Activated CD4-positive, alpha-beta T cell treated with anti-CD3 and anti-CD28 coated beads, Interleukin-2, amount 10 ng/mL, durations not matched to agents 24 days and 14 days (primary cell): ENCODE measurements at regions of chr4 and their contacts with region 1.

Region 1: GRCh38 chr4:88284439-88285234 is at the start of gene PPM1K:
- DNase-seq: peak; percentile 100
- H3K4me3 Mint-ChIP-seq: peak within 1 kb of the TSS; percentile 95
- H3K27ac Mint-ChIP-seq: peak within 1 kb of the TSS; percentile 99
- H3K4me1 Mint-ChIP-seq: peaks cover 37% of the 10 kb centered on the region
- H3K27me3 Mint-ChIP-seq: no peaks in the 10 kb centered on the region
- total RNA-seq, gene PPM1K: 38.8 and 43.8 TPM in 2 replicates

Region 2: GRCh38 chr4:86934771-86935565 is 1349.7 kb before region 1 on chr4 and contains the start of gene AFF1:
- intact Hi-C with region 1: loop called (anchors 10 kb)
- DNase-seq: peak; percentile 96
- H3K4me3 Mint-ChIP-seq: peak within 1 kb of the TSS; percentile 94
- H3K27ac Mint-ChIP-seq: peak within 1 kb of the TSS; percentile 98
- H3K4me1 Mint-ChIP-seq: peaks cover 48% of the 10 kb centered on the region
- H3K27me3 Mint-ChIP-seq: no peaks in the 10 kb centered on the region
- total RNA-seq, gene AFF1: 44.0 and 44.3 TPM in 2 replicates

Region 3: GRCh38 chr4:88007304-88008121 is 277.1 kb before region 1 on chr4 and contains the start of gene PKD2:
- intact Hi-C with region 1: loop called (anchors 1 kb)
- DNase-seq: peak; percentile 96
- H3K4me3 Mint-ChIP-seq: peak within 1 kb of the TSS; percentile 94
- H3K27ac Mint-ChIP-seq: peak within 1 kb of the TSS; percentile 88
- H3K4me1 Mint-ChIP-seq: peaks cover 31% of the 10 kb centered on the region
- H3K27me3 Mint-ChIP-seq: peaks cover 16% of the 10 kb centered on the region
- total RNA-seq, gene PKD2: 10.1 and 12.3 TPM in 2 replicates

Region 4: GRCh38 chr4:88320780-88321373 is 36.2 kb after region 1 on chr4:
- intact Hi-C with region 1: loop called (anchors 1 kb)
- DNase-seq: peak; percentile 84
- H3K4me3 Mint-ChIP-seq: peak overlapping the region; percentile 77
- H3K27ac Mint-ChIP-seq: peak overlapping the region; percentile 92
- H3K4me1 Mint-ChIP-seq: peaks cover 20% of the 10 kb centered on the region
- H3K27me3 Mint-ChIP-seq: no peaks in the 10 kb centered on the region

Region 5: DNA sequence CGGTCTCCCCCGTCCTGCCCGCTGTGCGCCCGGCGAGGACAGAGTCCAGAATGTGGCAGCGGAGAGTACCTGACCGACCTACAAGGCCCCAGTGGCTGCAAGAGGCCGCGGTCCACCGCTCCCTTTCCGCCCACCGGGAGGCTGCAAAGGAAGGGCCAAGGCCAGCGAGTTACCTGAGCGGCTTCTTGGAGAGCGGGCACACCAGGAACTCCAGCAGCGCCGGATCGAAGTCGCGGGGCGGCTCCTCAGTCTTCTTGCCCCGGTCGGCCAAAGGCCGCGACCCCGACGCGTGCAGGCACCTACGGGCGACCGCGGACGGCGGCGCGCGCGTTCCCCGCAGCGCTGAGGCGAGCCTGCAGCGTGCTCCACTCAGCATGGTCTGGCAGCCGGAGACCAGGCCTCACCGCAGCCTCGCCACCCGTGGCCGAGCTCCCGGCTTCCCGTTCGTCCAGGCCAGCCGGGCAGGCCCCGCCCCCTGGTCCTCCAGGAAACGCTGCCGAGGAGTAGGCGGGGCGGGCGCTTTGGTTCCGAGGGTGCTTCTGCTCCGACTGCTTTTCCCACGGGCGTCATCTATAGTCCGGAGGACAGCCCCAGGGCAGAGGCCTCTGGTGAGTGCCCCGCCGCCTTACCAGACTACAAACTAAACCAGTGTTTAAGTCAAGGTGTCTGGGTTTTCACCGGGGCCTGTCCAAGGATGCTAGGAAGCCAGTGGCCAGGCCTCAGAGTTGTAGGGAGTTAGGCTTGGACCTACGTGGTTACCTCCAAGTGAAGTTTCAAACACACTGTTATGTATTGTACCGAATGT is 238.9 kb after region 1 on chr4 and contains the start of gene PYURF:
- intact Hi-C with region 1: loop called (anchors 5 kb)
- DNase-seq: peak; percentile 94
- H3K4me3 Mint-ChIP-seq: peak within 1 kb of the TSS; percentile 98
- H3K27ac Mint-ChIP-seq: peak within 1 kb of the TSS; percentile 94
- H3K4me1 Mint-ChIP-seq: peaks cover 37% of the 10 kb centered on the region
- H3K27me3 Mint-ChIP-seq: no peaks in the 10 kb centered on the region
- total RNA-seq, gene PYURF: 54.6 and 57.0 TPM in 2 replicates

Region 6: GRCh38 chr4:89048906-89049601 is 764.4 kb after region 1 on chr4:
- intact Hi-C with region 1: no loop called
- DNase-seq: no peak
- H3K4me3 Mint-ChIP-seq: no peak overlapping the region
- H3K27ac Mint-ChIP-seq: no peak overlapping the region
- H3K4me1 Mint-ChIP-seq: no peaks in the 10 kb centered on the region
- H3K27me3 Mint-ChIP-seq: peaks cover 7% of the 10 kb centered on the region

Region 7: GRCh38 chr4:89110986-89111832 is 826.6 kb after region 1 on chr4 and contains the start of gene TIGD2:
- intact Hi-C with region 1: loop called (anchors 2 kb)
- DNase-seq: peak; percentile 95
- H3K4me3 Mint-ChIP-seq: peak within 1 kb of the TSS; percentile 83
- H3K27ac Mint-ChIP-seq: peak within 1 kb of the TSS; percentile 76
- H3K4me1 Mint-ChIP-seq: peaks cover 22% of the 10 kb centered on the region
- H3K27me3 Mint-ChIP-seq: peaks cover 32% of the 10 kb centered on the region
- total RNA-seq, gene TIGD2: 2.6 and 3.5 TPM in 2 replicates